ENCODE measurements at regions of chr10 and their contacts with region 1.

Region 1: GRCh38 chr10:33487014-33487776 is 152.7 kb upstream of the NRP1 start:
- DNase-seq: no peak

Region 2: GRCh38 chr10:32882077-32882476 is 605.1 kb before region 1 on chr10:
- intact Hi-C with region 1: no loop called
- DNase-seq: no peak

Region 3: DNA sequence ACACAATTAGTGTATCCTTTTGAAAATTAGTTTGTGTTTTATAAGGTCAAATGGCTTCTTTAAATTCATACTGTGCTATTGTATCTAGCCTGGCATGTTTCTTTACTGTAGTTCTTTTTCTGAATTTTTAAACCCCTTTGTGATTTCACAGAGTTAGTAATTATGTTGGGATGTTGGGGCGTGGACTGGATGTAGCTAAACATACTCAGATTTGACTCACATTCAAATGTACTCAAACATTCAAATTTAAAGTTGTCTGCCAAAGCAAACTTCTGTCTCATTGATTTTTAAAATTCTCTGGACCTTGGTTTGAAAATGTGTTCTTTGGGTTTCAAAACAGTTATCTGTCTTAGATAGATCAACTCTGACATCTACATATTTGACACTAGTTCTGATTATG is 145.6 kb before region 1 on chr10:
- intact Hi-C with region 1: loop called in 1 of 2 experiments (anchors 10 kb)
- DNase-seq: no peak

Region 4: GRCh38 chr10:34163075-34163905 is 676.1 kb after region 1 on chr10:
- intact Hi-C with region 1: no loop called
- DNase-seq: no peak

Measured in posterior vena cava (tissue), 2 donors.